ENCODE measurements at regions of chr10 and their contacts with region 1.

Region 1: GRCh38 chr10:69644658-69645295 is 14.7 kb downstream of the FAM241B start:
- DNase-seq: peak; percentile 64
- ATAC-seq: peak; percentile 57
- H3K4me3 Mint-ChIP-seq: no peak overlapping the region
- H3K27ac Mint-ChIP-seq: no peak overlapping the region
- H3K4me1 Mint-ChIP-seq: peaks cover 2% of the 10 kb centered on the region
- H3K27me3 Mint-ChIP-seq: peaks cover 4% of the 10 kb centered on the region

Region 2: GRCh38 chr10:69662271-69662781 is 17.5 kb after region 1 on chr10:
- CTCF ChIA-PET with region 1: interaction called, 10 read pairs
- POLR2A ChIA-PET with region 1: no interaction called
- DNase-seq: no peak
- ATAC-seq: no peak
- H3K4me3 Mint-ChIP-seq: no peak overlapping the region
- H3K27ac Mint-ChIP-seq: no peak overlapping the region
- H3K4me1 Mint-ChIP-seq: peaks cover 4% of the 10 kb centered on the region
- H3K27me3 Mint-ChIP-seq: peaks cover 22% of the 10 kb centered on the region

Region 3: DNA sequence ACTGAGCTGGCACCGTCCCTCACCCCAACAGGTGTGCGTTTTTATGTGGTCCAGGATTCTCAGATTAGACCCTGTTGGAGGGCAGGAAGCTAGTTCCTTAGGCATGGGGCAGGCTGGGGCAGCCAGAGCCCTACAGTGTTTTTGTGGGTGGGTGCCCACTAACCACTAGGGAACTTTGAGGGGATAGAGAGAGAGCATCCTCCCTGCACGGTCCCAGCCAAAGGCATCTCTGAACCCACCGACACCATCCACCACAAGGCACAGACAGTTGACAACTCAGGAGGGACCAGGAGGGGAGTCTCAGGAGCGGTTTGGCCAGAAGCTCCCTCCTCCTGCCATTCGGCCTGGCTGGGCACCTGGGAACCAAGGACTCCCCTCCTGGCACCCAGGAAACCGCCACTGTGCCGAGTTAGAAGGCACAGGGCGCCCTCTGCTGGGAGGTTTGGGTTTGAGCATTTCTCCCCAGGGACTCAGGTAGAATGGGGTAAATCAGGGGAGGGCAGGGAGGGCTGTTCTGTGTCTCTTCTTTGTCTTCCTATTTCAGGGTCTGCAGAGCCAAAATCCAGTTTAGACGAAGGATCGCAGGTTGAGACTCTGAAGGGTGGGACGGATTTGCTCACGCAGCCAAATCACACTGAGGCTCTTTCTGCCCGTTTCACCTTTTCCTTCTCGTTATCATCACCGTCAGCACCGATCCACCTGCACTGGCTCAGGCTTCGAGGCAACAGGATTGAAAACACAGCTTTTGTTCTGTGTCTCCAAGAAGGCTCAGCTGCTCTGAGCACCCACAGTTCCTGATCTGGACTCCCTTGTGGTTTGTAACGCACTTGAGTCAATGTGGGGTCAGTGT is 72.2 kb after region 1 on chr10:
- CTCF ChIA-PET with region 1: interaction called, 85 read pairs
- POLR2A ChIA-PET with region 1: interaction called, 3 read pairs
- DNase-seq: peak; percentile 76
- ATAC-seq: peak; percentile 71
- H3K4me3 Mint-ChIP-seq: no peak overlapping the region
- H3K27ac Mint-ChIP-seq: no peak overlapping the region
- H3K4me1 Mint-ChIP-seq: no peaks in the 10 kb centered on the region
- H3K27me3 Mint-ChIP-seq: peaks cover 11% of the 10 kb centered on the region